ENCODE measurements at regions of chr7 and their contacts with region 1.

Region 1: GRCh38 chr7:156857757-156858156 is 35.2 kb downstream of the LMBR1 start:
- DNase-seq: no peak
- H3K4me3 ChIP-seq: no peak overlapping the region
- H3K4me3 Mint-ChIP-seq: no peak overlapping the region
- H3K27ac ChIP-seq: no peak overlapping the region
- H3K27ac Mint-ChIP-seq: no peak overlapping the region
- H3K4me1 ChIP-seq: no peaks in the 10 kb centered on the region
- H3K4me1 Mint-ChIP-seq: peaks cover 12 to 28% (median 21%) of the 10 kb centered on the region in 3 donors
- H3K27me3 ChIP-seq: no peaks in the 10 kb centered on the region
- H3K27me3 Mint-ChIP-seq: no peaks in the 10 kb centered on the region

Region 2: DNA sequence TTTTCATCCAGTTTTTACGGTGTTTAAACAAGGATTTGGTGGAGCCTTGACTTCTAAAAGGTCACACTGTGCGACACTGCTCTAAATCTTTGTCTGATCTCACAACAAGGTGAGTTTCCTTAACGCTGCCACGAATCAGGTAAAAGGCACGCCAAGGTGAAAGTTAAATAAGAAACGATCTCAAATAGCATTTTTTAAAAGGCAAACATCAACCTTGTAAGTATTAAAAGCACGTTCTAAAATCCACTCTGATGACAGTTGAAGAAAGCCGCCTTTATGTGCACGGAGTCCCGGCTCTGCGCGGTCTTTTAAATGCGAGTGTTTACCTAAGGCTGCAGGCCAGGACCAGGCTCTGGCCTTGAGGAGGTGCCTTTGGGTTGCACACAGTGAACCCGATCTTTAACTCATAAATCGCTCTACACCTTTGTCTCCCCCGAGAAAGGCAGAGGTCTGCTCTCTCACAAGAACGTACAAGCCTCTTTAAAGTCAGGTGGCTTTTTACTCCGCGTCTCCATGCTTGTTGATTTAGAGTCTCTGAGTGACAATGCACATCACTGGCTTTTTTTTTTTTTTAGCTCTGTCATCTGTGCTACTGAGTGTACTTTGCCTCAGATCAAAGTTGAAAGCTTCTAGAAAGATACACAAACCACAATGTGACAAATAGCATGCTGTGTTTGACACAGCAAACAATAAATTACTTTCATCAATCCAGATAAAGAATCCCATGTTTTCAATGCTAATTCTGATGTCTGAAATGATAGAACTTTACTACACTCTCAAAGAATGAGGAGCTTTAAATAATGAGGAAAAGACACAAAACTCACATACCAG is 243.1 kb before region 1 on chr7:
- CTCF ChIA-PET with region 1: no interaction called
- POLR2A ChIA-PET with region 1: interaction called, 12 read pairs
- DNase-seq: no peak
- H3K4me3 ChIP-seq: no peak overlapping the region
- H3K4me3 Mint-ChIP-seq: no peak overlapping the region
- H3K27ac ChIP-seq: no peak overlapping the region
- H3K27ac Mint-ChIP-seq: no peak overlapping the region
- H3K4me1 ChIP-seq: peaks cover 19% of the 10 kb centered on the region
- H3K4me1 Mint-ChIP-seq: peaks cover 16 to 26% (median 20%) of the 10 kb centered on the region in 3 donors
- H3K27me3 ChIP-seq: no peaks in the 10 kb centered on the region
- H3K27me3 Mint-ChIP-seq: peaks cover 19 to 50% of the 10 kb centered on the region in 2 donors

Measured in CD8-positive, alpha-beta memory T cell (primary cell).